AG04450 (cell line): ENCODE measurements at regions of chr1 and their contacts with region 1.

Region 1: DNA sequence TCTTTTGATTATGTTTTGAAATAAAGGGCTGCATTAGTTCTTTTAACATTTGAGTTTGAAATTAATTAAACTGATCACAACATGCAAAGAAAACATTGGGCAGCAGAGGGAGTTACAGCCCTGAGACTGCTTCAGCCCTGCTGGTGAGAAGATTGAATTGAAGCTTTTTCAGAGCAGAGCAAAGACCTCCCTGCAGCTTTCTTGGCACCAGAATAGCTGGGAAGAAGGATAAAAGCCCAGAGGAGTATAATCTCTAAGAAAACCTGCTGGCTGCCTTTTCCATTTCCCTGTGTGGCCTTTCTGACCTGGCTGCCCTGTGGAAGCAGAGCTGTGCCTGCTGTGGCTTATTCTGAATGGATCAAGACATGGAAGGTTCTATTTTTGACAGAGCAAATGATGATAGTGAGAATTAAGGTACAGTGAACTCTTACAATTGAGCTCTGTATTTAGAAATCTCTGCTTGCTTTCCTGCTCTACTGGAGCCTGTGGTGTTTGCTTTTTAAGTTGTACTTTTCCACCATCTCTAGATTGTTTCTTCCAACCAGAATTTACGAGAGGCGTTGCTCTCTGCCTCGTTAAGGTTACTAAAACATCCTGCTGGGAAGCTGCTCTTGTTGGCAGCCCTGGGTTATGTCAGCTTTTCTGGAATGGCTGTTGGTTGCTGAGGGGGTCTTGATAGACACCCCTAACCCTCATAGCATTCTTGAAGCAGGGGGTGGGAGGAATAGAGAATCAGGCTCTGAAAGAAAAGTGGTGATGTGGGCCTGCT is 9.9 kb downstream of the SNRPE start:
- DNase-seq: peak; percentile 62
- H3K4me3 ChIP-seq: no peak overlapping the region
- H3K27ac ChIP-seq: no peak overlapping the region
- H3K27me3 ChIP-seq: no peaks in the 10 kb centered on the region
- CTCF ChIP-seq: peak; percentile 99

Region 2: GRCh38 chr1:203823306-203823705 is 48.0 kb before region 1 on chr1:
- CTCF ChIA-PET with region 1: no interaction called
- POLR2A ChIA-PET with region 1: no interaction called
- DNase-seq: no peak
- H3K4me3 ChIP-seq: no peak overlapping the region
- H3K27ac ChIP-seq: no peak overlapping the region
- H3K27me3 ChIP-seq: no peaks in the 10 kb centered on the region
- CTCF ChIP-seq: no peak

Region 3: GRCh38 chr1:203911806-203912205 is 40.5 kb after region 1 on chr1:
- CTCF ChIA-PET with region 1: interaction called, 15 read pairs
- POLR2A ChIA-PET with region 1: interaction called, 8 read pairs
- DNase-seq: no peak
- H3K4me3 ChIP-seq: no peak overlapping the region
- H3K27ac ChIP-seq: no peak overlapping the region
- H3K27me3 ChIP-seq: no peaks in the 10 kb centered on the region
- CTCF ChIP-seq: no peak

Region 4: GRCh38 chr1:204072931-204073836 is 201.9 kb after region 1 on chr1 and contains the start of gene SOX13:
- CTCF ChIA-PET with region 1: interaction called, 16 read pairs
- POLR2A ChIA-PET with region 1: interaction called, 4 read pairs
- DNase-seq: peak; percentile 61
- H3K4me3 ChIP-seq: peak within 1 kb of the TSS; percentile 74
- H3K27ac ChIP-seq: no peak within 1 kb of the TSS
- H3K27me3 ChIP-seq: peaks cover 20% of the 10 kb centered on the region
- CTCF ChIP-seq: peak; percentile 22; the same call in 1 of the 2 replicates
- polyA plus RNA-seq, gene SOX13: 1.8 and 2.0 TPM in 2 replicates

Region 5: GRCh38 chr1:204114606-204115005 is 243.3 kb after region 1 on chr1:
- CTCF ChIA-PET with region 1: interaction called, 11 read pairs
- POLR2A ChIA-PET with region 1: no interaction called
- DNase-seq: no peak
- H3K4me3 ChIP-seq: no peak overlapping the region
- H3K27ac ChIP-seq: no peak overlapping the region
- H3K27me3 ChIP-seq: no peaks in the 10 kb centered on the region
- CTCF ChIP-seq: no peak